Dendritic cell treated with granulocyte-macrophage colony-stimulating factor and Interleukin-4, amounts not matched to agents 40 ng/mL and 50 ng/mL, for 4 days (primary cell): ENCODE measurements at regions of chr1 and their contacts with region 1.

Region 1: GRCh38 chr1:15696956-15697521 is 12.9 kb downstream of the PLEKHM2 start:
- H3K4me3 Mint-ChIP-seq: peak overlapping the region; percentile 64
- H3K27ac Mint-ChIP-seq: peak overlapping the region; percentile 97
- H3K4me1 Mint-ChIP-seq: peaks cover 81% of the 10 kb centered on the region
- H3K27me3 Mint-ChIP-seq: no peaks in the 10 kb centered on the region

Region 2: GRCh38 chr1:15662477-15662876 is 34.6 kb before region 1 on chr1:
- intact Hi-C with region 1: loop called (anchors 5 kb)
- H3K4me3 Mint-ChIP-seq: no peak overlapping the region
- H3K27ac Mint-ChIP-seq: no peak overlapping the region
- H3K4me1 Mint-ChIP-seq: no peaks in the 10 kb centered on the region
- H3K27me3 Mint-ChIP-seq: no peaks in the 10 kb centered on the region